AG04450 (cell line): ENCODE measurements at regions of chr13 and their contacts with region 1.

Region 1: DNA sequence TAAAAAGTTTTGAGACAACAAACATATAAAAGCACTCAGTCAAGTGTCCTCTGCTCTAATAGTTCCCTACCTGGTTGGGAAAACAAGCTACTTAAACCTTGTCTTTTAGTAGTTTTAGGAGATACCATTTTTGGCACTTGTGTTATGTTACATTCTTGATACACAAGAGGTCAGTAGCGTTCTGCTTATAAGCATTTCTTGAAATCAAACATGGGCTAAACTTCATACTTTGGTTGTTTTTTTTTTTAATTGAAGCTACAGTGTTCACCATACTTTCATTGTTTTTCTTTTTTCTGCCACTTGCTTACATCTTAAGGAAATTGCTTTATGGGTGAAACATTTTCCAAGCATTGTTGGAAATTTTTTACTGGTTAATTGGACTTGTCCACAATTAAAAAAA is 12.9 kb downstream of the NHLRC3 start:
- DNase-seq: no peak
- H3K4me3 ChIP-seq: no peak overlapping the region
- H3K27ac ChIP-seq: no peak overlapping the region
- H3K27me3 ChIP-seq: no peaks in the 10 kb centered on the region
- CTCF ChIP-seq: peak; percentile 53

Region 2: DNA sequence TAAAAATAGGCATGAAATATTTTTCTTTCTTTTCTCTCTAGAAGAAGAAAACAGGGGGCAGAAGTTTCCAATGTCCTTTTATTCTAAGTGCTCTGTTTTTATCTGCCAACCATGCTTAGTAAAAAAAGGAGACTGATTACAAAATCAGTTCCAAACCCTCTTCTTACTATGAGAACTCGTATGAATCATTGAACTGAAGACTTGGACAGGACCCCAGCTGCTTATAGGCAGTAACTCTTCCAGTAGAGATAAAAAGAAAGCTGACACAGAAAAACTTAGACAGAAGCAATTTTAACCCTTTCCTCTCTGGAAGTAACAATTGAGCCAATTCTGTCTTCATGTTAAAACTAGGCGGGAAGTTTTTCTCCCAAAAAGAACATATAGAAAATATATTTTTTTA is 388.8 kb before region 1 on chr13:
- CTCF ChIA-PET with region 1: no interaction called
- POLR2A ChIA-PET with region 1: no interaction called
- DNase-seq: peak; percentile 6
- H3K4me3 ChIP-seq: no peak overlapping the region
- H3K27ac ChIP-seq: no peak overlapping the region
- H3K27me3 ChIP-seq: no peaks in the 10 kb centered on the region
- CTCF ChIP-seq: no peak

Region 3: DNA sequence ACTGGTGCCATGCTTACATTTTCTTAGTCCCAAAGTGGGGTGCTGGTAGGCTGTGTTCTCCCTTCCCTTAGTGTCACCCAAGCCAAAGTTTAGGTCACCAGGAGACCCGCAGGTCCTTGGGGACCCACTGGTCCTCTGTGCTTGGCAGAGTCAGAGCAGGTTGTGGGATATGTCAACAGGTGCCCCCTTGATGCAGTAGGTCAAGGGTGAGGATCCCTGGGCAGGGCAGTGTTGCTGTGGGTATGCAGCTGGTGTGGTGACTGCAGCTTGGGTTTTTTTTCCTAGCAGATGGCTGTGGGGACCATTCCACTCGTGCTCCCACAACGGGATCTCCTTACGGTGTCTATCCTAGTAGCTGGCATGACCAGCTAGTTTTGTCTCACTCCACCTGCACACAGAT is 10.8 kb after region 1 on chr13:
- CTCF ChIA-PET with region 1: interaction called, 11 read pairs
- POLR2A ChIA-PET with region 1: no interaction called
- DNase-seq: no peak
- H3K4me3 ChIP-seq: no peak overlapping the region
- H3K27ac ChIP-seq: no peak overlapping the region
- H3K27me3 ChIP-seq: no peaks in the 10 kb centered on the region
- CTCF ChIP-seq: no peak

Region 4: GRCh38 chr13:39676315-39676876 is 625.2 kb after region 1 on chr13:
- CTCF ChIA-PET with region 1: interaction called, 13 read pairs
- POLR2A ChIA-PET with region 1: no interaction called
- DNase-seq: no peak
- H3K4me3 ChIP-seq: no peak overlapping the region
- H3K27ac ChIP-seq: no peak overlapping the region
- H3K27me3 ChIP-seq: no peaks in the 10 kb centered on the region
- CTCF ChIP-seq: peak; percentile 50